Activated B cell treated with CpG ODN at 0.5 μM for 24 hours (primary cell): ENCODE measurements at regions of chr4 and their contacts with region 1.

Region 1: DNA sequence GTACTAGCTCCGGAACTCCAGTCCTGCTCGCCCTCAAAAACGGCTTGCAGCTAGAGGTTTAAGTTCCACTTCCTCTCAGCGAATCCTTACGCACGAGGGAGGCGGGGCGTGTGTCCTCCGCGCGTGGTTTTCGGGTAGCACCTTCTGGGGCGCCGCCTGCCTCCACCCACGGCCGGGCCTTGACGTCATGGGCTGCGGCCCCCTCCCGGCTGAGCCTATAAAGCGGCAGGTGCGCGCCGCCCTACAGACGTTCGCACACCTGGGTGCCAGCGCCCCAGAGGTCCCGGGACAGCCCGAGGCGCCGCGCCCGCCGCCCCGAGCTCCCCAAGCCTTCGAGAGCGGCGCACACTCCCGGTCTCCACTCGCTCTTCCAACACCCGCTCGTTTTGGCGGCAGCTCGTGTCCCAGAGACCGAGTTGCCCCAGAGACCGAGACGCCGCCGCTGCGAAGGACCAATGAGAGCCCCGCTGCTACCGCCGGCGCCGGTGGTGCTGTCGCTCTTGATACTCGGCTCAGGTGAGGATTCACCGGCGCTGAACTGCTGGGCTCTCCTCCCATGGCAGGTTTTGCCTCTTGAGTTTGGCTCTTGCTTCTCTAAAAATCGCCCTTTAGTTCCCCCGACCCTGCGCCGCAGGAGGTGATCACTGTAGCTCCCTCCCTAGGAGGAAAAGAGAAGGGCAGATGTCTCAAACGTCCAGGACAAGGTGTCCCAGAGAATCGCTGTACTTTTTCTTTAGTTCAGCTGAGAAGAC is at the start of gene AREG:
- DNase-seq: peak; percentile 87
- ATAC-seq: peak; percentile 92
- H3K4me3 Mint-ChIP-seq: peak within 1 kb of the TSS; percentile 95
- H3K27ac Mint-ChIP-seq: peak within 1 kb of the TSS; percentile 96
- H3K4me1 Mint-ChIP-seq: peaks cover 14% of the 10 kb centered on the region
- H3K27me3 Mint-ChIP-seq: peaks cover 3% of the 10 kb centered on the region
- CTCF ChIP-seq: no peak
- total RNA-seq, gene AREG: 2.1 and 2.2 TPM in 2 replicates

Region 2: GRCh38 chr4:74157561-74158465 is 287.3 kb before region 1 on chr4 and contains the start of gene MTHFD2L:
- CTCF ChIA-PET with region 1: no interaction called
- POLR2A ChIA-PET with region 1: no interaction called
- intact Hi-C with region 1: loop called (anchors 1 kb)
- DNase-seq: peak; percentile 83
- ATAC-seq: peak; percentile 97
- H3K4me3 Mint-ChIP-seq: peak within 1 kb of the TSS; percentile 92
- H3K27ac Mint-ChIP-seq: peak within 1 kb of the TSS; percentile 80
- H3K4me1 Mint-ChIP-seq: peaks cover 18% of the 10 kb centered on the region
- H3K27me3 Mint-ChIP-seq: peaks cover 6% of the 10 kb centered on the region
- CTCF ChIP-seq: no peak
- total RNA-seq, gene MTHFD2L: 12.0 and 14.3 TPM in 2 replicates

Region 3: DNA sequence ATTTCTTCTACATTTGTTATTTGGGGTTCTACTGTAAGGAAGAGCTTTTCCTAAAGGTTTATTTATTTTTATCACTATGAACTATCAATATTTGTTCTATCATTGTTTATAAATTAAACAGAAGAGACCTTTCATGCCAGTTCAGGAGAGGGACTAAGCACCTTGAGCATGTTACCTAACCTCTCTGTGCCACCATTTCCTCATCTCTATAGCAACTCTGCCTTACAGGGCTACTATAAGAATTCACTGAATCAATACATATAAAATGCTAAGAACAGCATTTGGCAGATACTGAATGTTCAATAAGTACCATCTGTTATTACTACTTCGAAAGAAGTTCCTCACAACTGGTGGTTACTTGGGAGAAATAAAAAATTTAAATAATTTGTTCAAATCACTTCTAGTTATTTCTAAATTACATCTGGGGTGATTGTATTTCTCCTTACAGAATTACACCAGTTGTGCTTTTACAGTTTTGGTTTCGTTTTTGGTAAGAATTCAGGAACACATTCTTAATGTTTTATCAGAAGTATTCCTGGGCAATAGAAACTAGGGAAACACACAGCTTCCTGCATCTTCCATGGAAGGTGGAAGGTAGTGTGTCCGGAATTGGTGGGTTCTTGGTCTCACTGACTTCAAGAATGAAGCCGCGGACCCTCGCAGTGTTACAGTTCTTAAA is 47.2 kb before region 1 on chr4:
- CTCF ChIA-PET with region 1: interaction called, 5 read pairs
- POLR2A ChIA-PET with region 1: interaction called, 12 read pairs
- intact Hi-C with region 1: loop called (anchors 1 kb)
- DNase-seq: no peak
- ATAC-seq: peak; percentile 68
- H3K4me3 Mint-ChIP-seq: peak overlapping the region; percentile 99
- H3K27ac Mint-ChIP-seq: peak overlapping the region; percentile 98
- H3K4me1 Mint-ChIP-seq: peaks cover 20% of the 10 kb centered on the region
- H3K27me3 Mint-ChIP-seq: no peaks in the 10 kb centered on the region
- CTCF ChIP-seq: no peak

Region 4: DNA sequence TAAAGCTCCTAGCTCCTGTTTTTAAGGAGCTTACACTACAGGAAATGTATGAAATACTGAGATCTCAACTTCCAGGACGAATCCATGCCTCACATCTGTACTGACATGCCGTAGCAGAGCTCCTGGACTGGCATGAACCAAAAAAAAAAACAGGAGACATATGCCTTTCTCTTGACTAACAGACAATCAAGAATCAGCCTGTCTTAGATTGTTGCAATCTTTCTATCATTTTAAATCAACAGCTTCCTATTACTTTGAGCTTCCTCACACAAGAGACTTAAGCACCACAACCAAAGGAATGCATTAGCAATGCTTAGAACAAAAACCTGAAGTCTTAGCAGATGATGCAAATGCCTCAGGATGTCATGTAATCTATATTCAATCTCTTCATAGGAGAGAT is 34.8 kb before region 1 on chr4:
- CTCF ChIA-PET with region 1: no interaction called
- POLR2A ChIA-PET with region 1: no interaction called
- intact Hi-C with region 1: no loop called
- DNase-seq: no peak
- ATAC-seq: no peak
- H3K4me3 Mint-ChIP-seq: no peak overlapping the region
- H3K27ac Mint-ChIP-seq: no peak overlapping the region
- H3K4me1 Mint-ChIP-seq: no peaks in the 10 kb centered on the region
- H3K27me3 Mint-ChIP-seq: peaks cover 3% of the 10 kb centered on the region
- CTCF ChIP-seq: no peak

Region 5: GRCh38 chr4:74543231-74543670 is 98.2 kb after region 1 on chr4:
- CTCF ChIA-PET with region 1: no interaction called
- POLR2A ChIA-PET with region 1: no interaction called
- intact Hi-C with region 1: loop called (anchors 1 kb)
- DNase-seq: no peak
- ATAC-seq: peak; percentile 28
- H3K4me3 Mint-ChIP-seq: peak overlapping the region; percentile 13
- H3K27ac Mint-ChIP-seq: no peak overlapping the region
- H3K4me1 Mint-ChIP-seq: peaks cover 2% of the 10 kb centered on the region
- H3K27me3 Mint-ChIP-seq: no peaks in the 10 kb centered on the region
- CTCF ChIP-seq: no peak

Region 6: GRCh38 chr4:75514131-75514948 is 1069.3 kb after region 1 on chr4 and contains the starts of genes RCHY1 and THAP6:
- CTCF ChIA-PET with region 1: no interaction called
- POLR2A ChIA-PET with region 1: no interaction called
- intact Hi-C with region 1: loop called (anchors 1 kb)
- DNase-seq: peak; percentile 88
- ATAC-seq: peak; percentile 87
- H3K4me3 Mint-ChIP-seq: no peak within 1 kb of the TSS
- H3K27ac Mint-ChIP-seq: peak within 1 kb of the TSS; percentile 95
- H3K4me1 Mint-ChIP-seq: peaks cover 39% of the 10 kb centered on the region
- H3K27me3 Mint-ChIP-seq: no peaks in the 10 kb centered on the region
- CTCF ChIP-seq: no peak
- total RNA-seq, gene RCHY1: 28.5 and 29.6 TPM in 2 replicates
- total RNA-seq, gene THAP6: 17.4 and 24.6 TPM in 2 replicates